Natural killer cell (primary cell): ENCODE measurements at regions of chr4 and their contacts with region 1.

Region 1: DNA sequence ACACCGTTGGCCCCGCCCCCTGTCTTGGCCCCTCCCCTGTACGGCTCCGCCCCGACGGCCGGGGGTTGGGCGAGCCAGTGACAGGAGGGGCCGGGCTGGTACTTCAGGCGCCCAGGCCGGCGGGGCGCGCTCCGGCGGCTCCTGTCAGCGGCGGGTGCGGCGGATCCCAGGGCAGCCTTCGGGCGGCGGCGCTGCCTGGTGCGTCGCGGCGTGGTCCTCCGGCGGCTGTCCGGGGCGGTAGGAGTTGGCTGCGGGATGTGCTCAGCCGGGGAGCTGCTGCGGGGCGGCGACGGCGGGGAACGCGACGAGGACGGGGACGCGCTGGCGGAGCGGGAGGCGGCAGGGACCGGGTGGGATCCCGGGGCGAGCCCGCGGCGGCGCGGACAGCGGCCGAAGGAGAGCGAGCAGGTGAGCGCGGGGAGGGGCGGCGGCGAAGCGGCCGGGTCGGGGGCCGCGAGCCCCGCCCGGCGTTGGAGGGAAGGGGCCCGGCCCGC is at the start of gene FAM241A:
- DNase-seq: peak; percentile 85 to 91
- ATAC-seq: peak; percentile 91 to 98 (median 94)
- H3K4me3 ChIP-seq: peak within 1 kb of the TSS; percentile 93
- H3K4me3 Mint-ChIP-seq: peak within 1 kb of the TSS; percentile 81
- H3K27ac ChIP-seq: peak within 1 kb of the TSS; percentile 84
- H3K27ac Mint-ChIP-seq: peak within 1 kb of the TSS; percentile 43 to 54
- H3K4me1 ChIP-seq: peaks cover 7% of the 10 kb centered on the region
- H3K4me1 Mint-ChIP-seq: peaks cover 6 to 10% of the 10 kb centered on the region in 2 donors
- H3K27me3 ChIP-seq: peaks cover 3% of the 10 kb centered on the region
- H3K27me3 Mint-ChIP-seq: peaks cover 6 to 8% of the 10 kb centered on the region in 2 donors
- CTCF ChIP-seq: no peak
- total RNA-seq, gene FAM241A: 0.36 to 0.75 (median 0.40) TPM

Region 2: GRCh38 chr4:112636688-112637551 is 491.5 kb after region 1 on chr4 and contains the starts of genes LARP7 and ZGRF1:
- intact Hi-C with region 1: loop called (anchors 2 kb)
- DNase-seq: peak; percentile 95 to 99
- ATAC-seq: peak; percentile 87 to 94 (median 87)
- H3K4me3 ChIP-seq: peak within 1 kb of the TSS; percentile 66
- H3K4me3 Mint-ChIP-seq: no peak within 1 kb of the TSS
- H3K27ac ChIP-seq: peak within 1 kb of the TSS; percentile 93
- H3K27ac Mint-ChIP-seq: no peak within 1 kb of the TSS
- H3K4me1 ChIP-seq: peaks cover 6% of the 10 kb centered on the region
- H3K4me1 Mint-ChIP-seq: peaks cover 14 to 15% of the 10 kb centered on the region in 2 donors
- H3K27me3 ChIP-seq: no peaks in the 10 kb centered on the region
- H3K27me3 Mint-ChIP-seq: no peaks in the 10 kb centered on the region
- CTCF ChIP-seq: peak; percentile 72
- total RNA-seq, gene LARP7: 45.7 to 55.4 (median 48.4) TPM
- total RNA-seq, gene ZGRF1: 13.0 to 25.9 (median 20.0) TPM